Mammary epithelial cell (primary cell): ENCODE measurements at regions of chr12 and their contacts with region 1.

Region 1: DNA sequence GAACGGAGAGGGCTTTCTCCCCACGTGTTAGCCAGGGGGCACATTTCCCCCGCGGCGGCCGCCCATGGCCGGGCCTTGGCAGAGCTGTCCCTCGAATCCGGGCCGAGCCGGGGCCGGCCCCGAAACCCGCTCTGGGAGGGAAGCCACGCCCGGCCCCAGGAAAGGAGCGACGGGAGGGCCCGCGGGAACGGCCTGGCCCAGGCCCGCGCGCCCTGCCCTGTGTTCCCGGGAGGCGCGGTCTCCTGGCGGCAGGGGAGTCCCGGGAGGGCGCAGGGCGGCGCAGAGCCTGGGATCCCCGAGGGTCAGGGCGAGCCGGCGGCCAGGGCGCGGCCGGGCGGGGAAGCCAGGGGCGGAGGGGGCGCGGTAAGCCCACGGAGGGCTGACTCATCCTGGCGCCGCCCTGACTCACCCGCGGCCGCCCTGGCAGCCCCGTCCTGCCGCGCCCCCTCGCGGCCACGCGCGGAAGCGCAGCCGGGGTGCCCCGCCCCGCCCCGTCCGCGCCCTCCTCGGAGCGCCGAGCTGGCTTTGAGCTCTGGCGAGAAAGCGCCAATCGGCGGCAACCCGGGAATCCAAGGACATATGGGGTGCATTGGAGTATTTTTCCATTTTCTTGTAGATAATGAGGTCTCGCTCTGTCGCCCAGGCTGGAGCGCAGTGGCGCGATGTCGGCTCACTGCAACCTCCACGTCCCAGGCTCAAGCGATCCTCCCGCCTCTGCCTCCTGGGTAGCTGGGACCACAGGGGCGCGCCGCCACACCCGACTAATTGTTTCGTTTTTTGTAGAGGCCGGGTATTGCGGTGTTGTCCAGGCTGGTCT is 31.8 kb upstream of the PLEKHG6 start:
- DNase-seq: peak; percentile 93
- H3K4me3 ChIP-seq: peak overlapping the region; percentile 5 to 42 (median 38)
- H3K27ac ChIP-seq: peak overlapping the region; percentile 99
- H3K4me1 ChIP-seq: peaks cover 58% of the 10 kb centered on the region
- H3K27me3 ChIP-seq: no peaks in the 10 kb centered on the region
- CTCF ChIP-seq: peak; percentile 50 to 68

Region 2: GRCh38 chr12:6124411-6125309 is 154.0 kb before region 1 on chr12 and contains the start of gene VWF:
- CTCF ChIA-PET with region 1: no interaction called
- dilution Hi-C with region 1: no loop called
- in situ Hi-C with region 1: no loop called
- intact Hi-C with region 1: no loop called
- DNase-seq: no peak
- H3K4me3 ChIP-seq: no peak within 1 kb of the TSS
- H3K27ac ChIP-seq: no peak within 1 kb of the TSS
- H3K4me1 ChIP-seq: peaks cover 5% of the 10 kb centered on the region
- H3K27me3 ChIP-seq: peaks cover 3% of the 10 kb centered on the region
- CTCF ChIP-seq: no peak
- total RNA-seq, gene VWF: under 0.01 to 0.49 TPM

Region 3: DNA sequence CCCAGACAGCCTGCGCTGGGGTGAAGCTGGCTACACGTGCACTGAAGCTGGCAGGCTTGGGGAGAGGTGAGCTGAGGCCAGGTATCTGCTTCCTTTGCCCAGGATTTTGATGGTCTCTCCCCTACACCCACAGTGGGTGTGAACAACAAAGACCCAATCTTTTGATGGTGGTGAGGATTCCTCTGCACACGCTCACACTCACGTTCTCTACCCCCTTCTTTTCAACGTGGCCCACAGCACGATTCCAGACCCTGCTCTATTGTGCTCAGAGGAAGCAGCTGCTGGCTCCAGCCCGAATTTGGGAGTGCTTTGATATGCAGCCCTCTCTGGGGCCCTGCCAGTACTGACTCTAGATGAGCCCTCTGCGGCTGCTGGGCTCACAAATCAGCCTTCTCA is 73.5 kb before region 1 on chr12:
- CTCF ChIA-PET with region 1: interaction called, 3 read pairs
- dilution Hi-C with region 1: no loop called
- in situ Hi-C with region 1: loop called (anchors 5 kb)
- intact Hi-C with region 1: loop called (anchors 1 kb)
- DNase-seq: no peak
- H3K4me3 ChIP-seq: no peak overlapping the region
- H3K27ac ChIP-seq: peak overlapping the region; percentile 18
- H3K4me1 ChIP-seq: peaks cover 48% of the 10 kb centered on the region
- H3K27me3 ChIP-seq: no peaks in the 10 kb centered on the region
- CTCF ChIP-seq: no peak

Region 4: DNA sequence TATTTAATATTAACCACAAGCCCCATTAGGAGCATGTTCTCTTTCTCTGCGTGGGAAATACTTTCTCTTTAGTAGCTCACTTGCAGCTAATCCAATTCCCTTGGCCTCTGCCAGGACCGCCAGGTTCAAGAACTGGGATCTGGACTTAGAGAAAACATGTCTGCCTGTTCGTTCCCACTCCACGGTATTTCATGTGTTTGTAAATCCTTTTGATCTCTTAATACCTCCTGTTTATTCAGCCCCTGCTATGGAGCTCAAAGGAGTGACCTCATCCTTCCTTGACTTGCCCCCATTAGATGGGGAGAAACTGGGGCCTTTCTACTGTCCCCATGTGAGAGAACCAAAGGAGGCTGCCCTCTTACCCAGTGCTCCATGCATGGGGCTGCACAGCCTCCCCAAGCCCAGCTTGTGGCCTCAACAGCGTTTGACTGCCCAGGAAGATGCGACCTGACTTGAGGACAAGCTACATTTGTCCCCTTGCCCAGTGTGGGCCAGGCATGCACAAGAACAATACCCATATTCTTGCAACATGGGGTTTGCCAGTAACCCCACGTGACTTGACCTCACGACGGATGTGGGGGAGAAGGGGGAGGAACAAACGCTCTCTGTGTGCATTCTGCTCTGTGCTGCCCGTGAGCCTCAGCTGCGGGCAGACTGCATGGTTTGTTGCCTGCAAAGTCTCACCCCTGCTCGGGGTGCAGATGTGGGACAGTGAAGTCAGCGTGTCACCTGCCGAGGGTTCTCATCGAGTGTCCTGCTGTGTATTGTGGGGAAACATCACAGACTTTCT is 48.1 kb before region 1 on chr12:
- CTCF ChIA-PET with region 1: interaction called, 4 read pairs
- dilution Hi-C with region 1: loop called (anchors 5 kb)
- in situ Hi-C with region 1: loop called in 1 of 2 experiments (anchors 5 kb)
- intact Hi-C with region 1: loop called (anchors 1 kb)
- DNase-seq: peak; percentile 89
- H3K4me3 ChIP-seq: no peak overlapping the region
- H3K27ac ChIP-seq: peak overlapping the region; percentile 97
- H3K4me1 ChIP-seq: peaks cover 67% of the 10 kb centered on the region
- H3K27me3 ChIP-seq: no peaks in the 10 kb centered on the region
- CTCF ChIP-seq: no peak